CD8-positive, alpha-beta T cell (primary cell): ENCODE measurements at regions of chr5 and their contacts with region 1.

Region 1: DNA sequence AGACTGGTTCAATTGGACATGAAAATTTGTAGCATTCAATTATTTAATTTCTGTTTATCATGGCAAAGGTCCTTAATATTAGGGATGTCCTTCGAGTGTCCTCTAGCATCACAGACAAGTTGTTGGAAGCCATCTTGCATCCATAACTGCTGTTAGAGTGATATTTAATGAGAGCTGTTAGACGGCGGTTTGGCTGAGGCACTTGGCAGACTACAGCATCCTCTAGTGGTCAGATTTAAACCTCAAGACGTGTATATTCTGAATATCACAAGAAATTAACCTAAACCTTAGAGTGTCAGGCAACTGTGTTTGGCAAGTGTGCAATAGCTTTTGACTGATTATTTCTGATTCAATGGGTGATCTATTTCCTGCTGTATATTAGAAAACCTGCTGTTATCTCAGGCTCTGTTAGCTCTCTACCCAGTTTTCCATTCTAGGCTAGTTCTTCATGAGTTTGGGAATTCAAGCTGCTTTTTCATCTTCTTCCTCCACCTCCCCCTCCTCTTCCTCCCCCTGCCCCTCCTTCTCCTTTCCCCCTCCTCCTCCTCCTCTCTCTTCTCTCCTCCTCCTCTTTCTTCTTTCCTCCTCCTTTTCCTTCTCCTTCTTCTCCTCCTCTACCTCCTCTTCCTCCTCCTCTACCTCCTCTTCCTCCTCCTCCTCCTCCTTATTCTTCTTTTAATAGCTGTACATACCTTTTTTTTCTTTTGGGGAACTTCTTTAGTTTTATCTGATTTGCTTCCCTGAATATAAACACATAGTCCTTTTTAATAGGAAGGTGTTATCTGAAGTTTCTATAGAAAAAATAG is 8.6 kb downstream of the SPINK1 start:
- DNase-seq: peak in 7 of 9 experiments; percentile 6 to 80 (median 39)
- ATAC-seq: peak; percentile 85
- H3K4me3 ChIP-seq: no peak overlapping the region
- H3K4me3 Mint-ChIP-seq: no peak overlapping the region
- H3K27ac ChIP-seq: no peak overlapping the region
- H3K27ac Mint-ChIP-seq: no peak overlapping the region
- H3K4me1 ChIP-seq: no peaks in the 10 kb centered on the region
- H3K4me1 Mint-ChIP-seq: no peaks in the 10 kb centered on the region
- H3K27me3 ChIP-seq: peaks cover 0 to under 1% of the 10 kb centered on the region in 2 experiments
- H3K27me3 Mint-ChIP-seq: peaks cover 3% of the 10 kb centered on the region
- CTCF ChIP-seq: peak; percentile 96

Region 2: GRCh38 chr5:146533260-146533857 is 1289.5 kb before region 1 on chr5:
- CTCF ChIA-PET with region 1: no interaction called
- POLR2A ChIA-PET with region 1: no interaction called
- intact Hi-C with region 1: loop called in 1 of 2 experiments (anchors 5 kb)
- DNase-seq: peak; percentile 51 to 79 (median 71)
- ATAC-seq: peak; percentile 85
- H3K4me3 ChIP-seq: no peak overlapping the region
- H3K4me3 Mint-ChIP-seq: no peak overlapping the region
- H3K27ac ChIP-seq: no peak overlapping the region
- H3K27ac Mint-ChIP-seq: no peak overlapping the region
- H3K4me1 ChIP-seq: no peaks in the 10 kb centered on the region
- H3K4me1 Mint-ChIP-seq: peaks cover 3% of the 10 kb centered on the region
- H3K27me3 ChIP-seq: no peaks in the 10 kb centered on the region
- H3K27me3 Mint-ChIP-seq: peaks cover under 1% of the 10 kb centered on the region
- CTCF ChIP-seq: peak; percentile 70

Region 3: GRCh38 chr5:147223948-147224791 is 598.7 kb before region 1 on chr5:
- CTCF ChIA-PET with region 1: no interaction called
- POLR2A ChIA-PET with region 1: no interaction called
- intact Hi-C with region 1: loop called in 1 of 2 experiments (anchors 10 kb)
- DNase-seq: no peak
- ATAC-seq: no peak
- H3K4me3 ChIP-seq: no peak overlapping the region
- H3K4me3 Mint-ChIP-seq: no peak overlapping the region
- H3K27ac ChIP-seq: no peak overlapping the region
- H3K27ac Mint-ChIP-seq: no peak overlapping the region
- H3K4me1 ChIP-seq: no peaks in the 10 kb centered on the region
- H3K4me1 Mint-ChIP-seq: peaks cover 4% of the 10 kb centered on the region
- H3K27me3 ChIP-seq: no peaks in the 10 kb centered on the region
- H3K27me3 Mint-ChIP-seq: no peaks in the 10 kb centered on the region
- CTCF ChIP-seq: no peak

Region 4: DNA sequence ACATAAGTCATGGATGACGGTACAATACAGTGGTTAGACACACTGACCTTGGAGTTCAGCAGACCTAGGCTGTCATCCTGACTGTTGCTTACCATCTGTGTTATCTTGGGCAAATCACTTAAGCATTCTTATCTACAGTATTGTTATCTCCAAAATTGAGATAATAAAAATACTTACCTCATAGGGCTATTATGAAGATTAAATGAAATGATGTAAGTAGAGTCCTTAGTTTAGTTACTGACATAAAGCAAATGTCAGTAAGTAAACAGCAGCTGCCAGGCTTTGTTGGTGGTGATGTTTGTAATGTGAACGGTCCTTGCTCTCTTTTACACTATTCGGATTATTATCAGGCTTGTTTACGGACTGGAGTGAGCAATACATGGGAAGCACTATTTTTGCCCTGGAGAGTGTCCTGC is 205.7 kb before region 1 on chr5:
- CTCF ChIA-PET with region 1: interaction called, 10 read pairs
- POLR2A ChIA-PET with region 1: no interaction called
- intact Hi-C with region 1: no loop called
- DNase-seq: no peak
- ATAC-seq: no peak
- H3K4me3 ChIP-seq: no peak overlapping the region
- H3K4me3 Mint-ChIP-seq: no peak overlapping the region
- H3K27ac ChIP-seq: no peak overlapping the region
- H3K27ac Mint-ChIP-seq: no peak overlapping the region
- H3K4me1 ChIP-seq: no peaks in the 10 kb centered on the region
- H3K4me1 Mint-ChIP-seq: no peaks in the 10 kb centered on the region
- H3K27me3 ChIP-seq: no peaks in the 10 kb centered on the region
- H3K27me3 Mint-ChIP-seq: no peaks in the 10 kb centered on the region
- CTCF ChIP-seq: no peak

Region 5: DNA sequence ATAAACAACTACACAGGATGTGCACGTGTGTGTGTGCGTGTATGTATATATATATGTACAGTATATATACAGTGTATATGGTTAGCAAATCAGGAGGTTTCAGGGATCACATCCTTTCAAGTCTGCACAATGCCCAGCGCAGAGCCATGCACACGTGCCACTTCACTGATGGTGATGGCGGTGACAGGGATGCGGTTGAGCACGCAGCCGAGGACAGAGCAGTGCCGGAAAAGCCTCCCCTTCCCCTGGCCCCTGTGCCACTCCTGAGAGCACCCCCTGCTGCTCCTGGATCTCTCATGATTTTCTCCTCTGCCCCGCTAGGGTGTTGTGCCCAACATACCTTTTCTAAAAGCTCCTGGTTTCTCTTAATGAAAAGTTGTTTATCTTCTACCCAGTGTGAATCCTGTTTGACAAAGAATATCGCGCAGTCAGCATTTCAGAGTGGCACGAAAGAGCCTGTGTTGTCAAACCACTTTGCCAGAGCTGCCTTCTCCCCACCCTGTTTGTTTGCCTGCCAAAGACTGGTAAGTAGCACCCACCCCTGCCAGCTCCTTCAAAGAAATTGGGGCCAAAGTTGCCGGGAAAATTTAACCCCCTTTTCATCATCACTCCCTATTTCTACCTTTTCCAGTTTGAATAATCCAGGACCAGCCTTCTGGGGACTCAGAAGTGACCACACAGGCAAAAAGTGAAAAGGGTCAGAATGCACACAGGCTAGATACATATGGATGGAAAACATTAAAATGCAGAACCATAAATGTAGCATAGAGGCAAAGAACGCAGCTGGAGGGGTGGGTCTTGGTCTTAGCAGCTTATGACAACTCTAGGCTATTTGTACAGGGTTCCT is 186.8 kb before region 1 on chr5:
- CTCF ChIA-PET with region 1: interaction called, 143 read pairs
- POLR2A ChIA-PET with region 1: interaction called, 3 read pairs
- intact Hi-C with region 1: no loop called
- DNase-seq: no peak
- ATAC-seq: no peak
- H3K4me3 ChIP-seq: no peak overlapping the region
- H3K4me3 Mint-ChIP-seq: no peak overlapping the region
- H3K27ac ChIP-seq: no peak overlapping the region
- H3K27ac Mint-ChIP-seq: no peak overlapping the region
- H3K4me1 ChIP-seq: no peaks in the 10 kb centered on the region
- H3K4me1 Mint-ChIP-seq: no peaks in the 10 kb centered on the region
- H3K27me3 ChIP-seq: no peaks in the 10 kb centered on the region
- H3K27me3 Mint-ChIP-seq: no peaks in the 10 kb centered on the region
- CTCF ChIP-seq: no peak